Ovary (tissue), 10 donors: ENCODE measurements at regions of chr2 and their contacts with region 1.

Region 1: GRCh38 chr2:1742681-1743395 is 1.5 kb downstream of the PXDN start:
- DNase-seq: peak; percentile 84 to 90 (median 87)
- H3K4me3 ChIP-seq: peak overlapping the region; percentile 85
- H3K27ac ChIP-seq: peak overlapping the region; percentile 87 to 96
- H3K4me1 ChIP-seq: peaks cover 21% of the 10 kb centered on the region
- H3K27me3 ChIP-seq: no peaks in the 10 kb centered on the region
- CTCF ChIP-seq: peak in 2 of 3 donors; percentile 53 to 55
- EP300 ChIP-seq: no peak
- POLR2A ChIP-seq: no peak

Region 2: GRCh38 chr2:1591978-1592907 is 150.6 kb before region 1 on chr2:
- intact Hi-C with region 1: loop called (anchors 2 to 5 kb)
- DNase-seq: peak; percentile 87 to 91 (median 90)
- H3K4me3 ChIP-seq: peak overlapping the region; percentile 1
- H3K27ac ChIP-seq: peak overlapping the region in 1 of 2 donors; percentile 20
- H3K4me1 ChIP-seq: peaks cover 9% of the 10 kb centered on the region
- H3K27me3 ChIP-seq: no peaks in the 10 kb centered on the region
- CTCF ChIP-seq: peak; percentile 69 to 94 (median 92)
- EP300 ChIP-seq: no peak
- POLR2A ChIP-seq: peak; percentile 25

Region 3: GRCh38 chr2:1653956-1654695 is 88.7 kb before region 1 on chr2:
- intact Hi-C with region 1: loop called in 2 of 4 experiments (anchors 5 kb)
- DNase-seq: peak in 2 of 5 donors; percentile 8 to 13
- H3K4me3 ChIP-seq: no peak overlapping the region
- H3K27ac ChIP-seq: peak overlapping the region in 1 of 2 donors; percentile 70
- H3K4me1 ChIP-seq: peaks cover 32% of the 10 kb centered on the region
- H3K27me3 ChIP-seq: no peaks in the 10 kb centered on the region
- CTCF ChIP-seq: no peak
- EP300 ChIP-seq: no peak
- POLR2A ChIP-seq: no peak

Region 4: DNA sequence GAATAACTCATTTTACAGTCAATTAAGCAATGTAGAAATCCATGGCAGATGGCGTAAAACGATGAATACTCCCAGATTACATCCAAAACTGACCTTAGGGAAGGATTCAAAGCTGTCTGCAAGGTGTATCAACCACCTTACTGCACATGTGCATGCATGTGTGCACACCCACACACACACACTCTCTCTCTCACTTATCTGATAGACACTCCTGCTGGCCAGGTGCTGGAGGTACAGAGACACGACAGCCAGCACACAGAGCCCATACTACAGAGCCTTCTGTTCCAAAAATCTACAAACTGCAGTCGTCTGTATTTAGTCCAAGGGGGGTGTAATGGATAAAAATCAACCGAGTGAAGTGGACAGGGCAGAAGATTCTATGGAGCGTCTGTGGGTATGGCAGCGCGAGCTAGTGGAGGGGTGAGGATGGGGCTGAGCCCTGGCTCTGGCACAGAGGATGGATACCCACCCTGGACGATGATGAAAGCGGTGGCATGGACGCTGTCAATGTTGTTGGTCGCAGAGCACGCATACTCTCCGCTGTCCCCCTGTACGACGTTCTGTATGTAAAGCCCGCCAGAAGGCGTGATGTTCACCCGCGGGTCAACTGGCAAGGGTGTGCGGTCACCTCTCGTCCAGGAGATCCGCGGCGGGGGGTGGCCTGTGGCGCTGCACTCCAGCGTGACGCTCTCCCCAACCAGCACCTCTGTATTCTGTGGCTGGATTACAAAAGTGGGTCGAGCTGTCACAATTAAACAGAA is 76.9 kb before region 1 on chr2:
- intact Hi-C with region 1: loop called in 3 of 4 experiments (anchors 5 to 10 kb)
- DNase-seq: peak in 2 of 5 donors; percentile 12 to 15
- H3K4me3 ChIP-seq: no peak overlapping the region
- H3K27ac ChIP-seq: no peak overlapping the region
- H3K4me1 ChIP-seq: no peaks in the 10 kb centered on the region
- H3K27me3 ChIP-seq: no peaks in the 10 kb centered on the region
- CTCF ChIP-seq: no peak
- EP300 ChIP-seq: no peak
- POLR2A ChIP-seq: no peak

Region 5: DNA sequence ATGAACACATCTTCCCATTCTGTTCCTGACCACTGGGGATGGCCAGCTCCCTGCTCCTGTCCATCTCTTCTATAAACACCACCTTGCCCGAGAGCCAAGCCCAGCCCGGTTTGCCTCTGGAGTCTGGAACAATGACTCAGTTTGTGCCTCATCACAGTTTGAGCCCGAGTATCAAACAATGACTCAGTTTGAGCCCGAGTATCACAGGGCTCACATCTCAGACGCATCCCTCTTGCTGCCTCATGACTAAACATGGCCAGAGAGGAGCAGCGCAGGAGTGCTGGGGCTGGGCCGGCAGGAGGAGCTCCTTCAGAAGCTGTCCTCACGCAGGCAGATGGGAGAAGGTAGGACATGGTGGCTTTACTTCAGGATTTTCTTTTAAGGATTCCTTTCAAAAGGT is 67.2 kb before region 1 on chr2:
- intact Hi-C with region 1: loop called in 2 of 4 experiments (anchors 10 kb)
- DNase-seq: peak in 4 of 5 donors; percentile 43 to 64 (median 58)
- H3K4me3 ChIP-seq: no peak overlapping the region
- H3K27ac ChIP-seq: no peak overlapping the region
- H3K4me1 ChIP-seq: no peaks in the 10 kb centered on the region
- H3K27me3 ChIP-seq: no peaks in the 10 kb centered on the region
- CTCF ChIP-seq: peak in 2 of 3 donors; percentile 16 to 29
- EP300 ChIP-seq: no peak
- POLR2A ChIP-seq: no peak

Region 6: DNA sequence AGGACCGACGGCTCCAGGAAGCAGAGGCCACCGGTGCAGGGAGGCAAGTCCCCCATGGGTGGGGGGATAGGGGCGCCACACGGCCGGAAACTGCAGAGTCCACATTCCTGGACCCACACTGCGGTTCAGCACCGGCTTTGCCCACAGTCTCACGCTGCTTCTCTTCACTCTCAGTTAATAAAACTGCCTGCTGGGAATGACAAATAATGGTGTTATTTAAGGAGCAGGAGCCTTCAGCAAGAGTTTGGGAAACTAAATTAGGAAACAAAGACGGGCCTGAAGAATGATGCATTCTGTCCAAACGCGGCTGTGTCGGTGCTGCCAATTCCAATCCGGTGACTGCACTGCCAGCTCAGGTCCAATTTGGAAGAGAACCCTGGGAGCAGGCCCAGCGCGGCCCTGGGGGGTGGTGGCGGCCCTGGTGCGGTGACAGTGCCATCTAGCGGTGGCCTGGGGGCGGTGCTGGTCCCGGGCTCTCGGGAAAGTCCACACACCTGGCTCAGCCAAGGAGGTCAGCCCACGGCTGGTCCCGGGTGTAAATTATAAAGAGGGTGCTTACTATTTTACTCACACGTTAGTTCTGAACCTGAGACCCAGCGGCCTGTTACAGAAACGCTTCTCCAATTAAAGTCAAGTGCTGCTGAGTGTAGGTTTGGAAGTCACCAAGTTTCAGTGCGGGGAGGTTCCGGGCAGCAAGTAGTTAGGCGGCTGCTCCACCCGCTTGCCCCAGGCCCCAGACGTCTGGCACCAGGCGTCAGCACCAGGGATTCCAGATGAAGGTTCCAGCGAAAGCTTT is 74.6 kb after region 1 on chr2:
- intact Hi-C with region 1: loop called in 1 of 4 experiments (anchors 5 kb)
- DNase-seq: peak; percentile 79 to 89 (median 88)
- H3K4me3 ChIP-seq: no peak overlapping the region
- H3K27ac ChIP-seq: no peak overlapping the region
- H3K4me1 ChIP-seq: peaks cover 5% of the 10 kb centered on the region
- H3K27me3 ChIP-seq: no peaks in the 10 kb centered on the region
- CTCF ChIP-seq: peak; percentile 83 to 92 (median 90)
- EP300 ChIP-seq: no peak
- POLR2A ChIP-seq: no peak